A549 (cell line): ENCODE measurements at regions of chr5 and their contacts with region 1.

Region 1: GRCh38 chr5:14351845-14352712 is 208.9 kb downstream of the TRIO start:
- DNase-seq: peak; percentile 61 to 74
- ATAC-seq: peak; percentile 97
- H3K4me3 ChIP-seq: no peak overlapping the region
- H3K27ac ChIP-seq: no peak overlapping the region
- H3K4me1 ChIP-seq: no peaks in the 10 kb centered on the region
- CTCF ChIP-seq: peak; percentile 85
- EP300 ChIP-seq: no peak
- POLR2A ChIP-seq: no peak
- RAD21 ChIP-seq: peak; percentile 51 to 65

Region 2: DNA sequence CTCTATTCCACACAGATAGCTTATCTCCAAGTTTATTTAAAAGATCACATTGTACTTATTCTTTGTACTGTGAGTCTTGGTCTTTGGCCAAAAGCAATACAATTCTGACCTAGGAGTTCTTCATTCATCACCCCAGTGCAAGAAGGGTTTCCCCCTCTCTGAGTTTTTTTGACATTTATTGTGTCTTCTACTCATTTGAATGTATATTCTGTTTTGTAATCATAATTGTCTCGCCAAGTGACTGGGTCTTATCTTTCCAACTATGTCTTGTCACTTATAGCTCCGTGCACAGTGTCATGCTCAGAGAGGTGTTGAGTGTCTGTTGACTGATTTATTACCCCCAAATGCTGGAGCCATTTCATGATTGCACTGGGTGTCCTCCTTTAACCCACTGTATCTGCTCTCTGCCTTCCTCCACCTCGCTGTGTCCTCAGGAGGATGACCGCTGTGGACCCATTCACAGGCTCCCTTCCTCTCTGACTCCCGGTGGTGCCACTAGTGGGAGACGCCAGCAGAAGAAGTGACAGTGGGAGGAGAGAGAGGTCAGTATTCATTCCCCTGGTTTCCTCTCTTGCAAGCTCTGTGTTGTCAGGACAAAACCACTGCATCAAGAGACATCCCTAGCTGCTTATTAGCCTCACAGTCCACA is 220.1 kb before region 1 on chr5:
- CTCF ChIA-PET with region 1: no interaction called
- POLR2A ChIA-PET with region 1: no interaction called
- DNase-seq: no peak
- ATAC-seq: peak in 1 of 2 experiments; percentile 23; a peak in 2 of 6 replicates
- H3K4me3 ChIP-seq: no peak overlapping the region
- H3K27ac ChIP-seq: no peak overlapping the region
- H3K4me1 ChIP-seq: no peaks in the 10 kb centered on the region
- CTCF ChIP-seq: no peak
- EP300 ChIP-seq: no peak
- POLR2A ChIP-seq: no peak
- RAD21 ChIP-seq: no peak

Region 3: DNA sequence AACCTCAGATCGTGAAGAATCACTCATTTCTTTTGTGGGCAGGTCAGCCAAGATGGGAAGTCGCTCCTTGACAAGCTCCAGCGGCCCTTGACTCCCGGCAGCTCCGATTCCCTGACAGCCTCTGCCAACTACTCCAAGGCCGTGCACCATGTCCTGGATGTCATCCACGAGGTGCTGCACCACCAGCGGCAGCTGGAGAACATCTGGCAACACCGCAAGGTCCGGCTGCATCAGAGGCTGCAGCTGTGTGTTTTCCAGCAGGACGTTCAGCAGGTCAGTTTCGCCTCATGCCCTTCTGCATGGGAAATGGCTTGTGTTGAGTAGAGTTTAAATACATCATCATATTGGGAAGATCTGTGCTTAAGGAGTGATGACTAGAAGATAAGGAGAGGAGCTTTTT is 35.6 kb before region 1 on chr5:
- CTCF ChIA-PET with region 1: interaction called, 11 read pairs
- POLR2A ChIA-PET with region 1: no interaction called
- DNase-seq: no peak
- ATAC-seq: no peak
- H3K4me3 ChIP-seq: no peak overlapping the region
- H3K27ac ChIP-seq: no peak overlapping the region
- H3K4me1 ChIP-seq: no peaks in the 10 kb centered on the region
- CTCF ChIP-seq: no peak
- EP300 ChIP-seq: no peak
- POLR2A ChIP-seq: no peak
- RAD21 ChIP-seq: no peak

Region 4: DNA sequence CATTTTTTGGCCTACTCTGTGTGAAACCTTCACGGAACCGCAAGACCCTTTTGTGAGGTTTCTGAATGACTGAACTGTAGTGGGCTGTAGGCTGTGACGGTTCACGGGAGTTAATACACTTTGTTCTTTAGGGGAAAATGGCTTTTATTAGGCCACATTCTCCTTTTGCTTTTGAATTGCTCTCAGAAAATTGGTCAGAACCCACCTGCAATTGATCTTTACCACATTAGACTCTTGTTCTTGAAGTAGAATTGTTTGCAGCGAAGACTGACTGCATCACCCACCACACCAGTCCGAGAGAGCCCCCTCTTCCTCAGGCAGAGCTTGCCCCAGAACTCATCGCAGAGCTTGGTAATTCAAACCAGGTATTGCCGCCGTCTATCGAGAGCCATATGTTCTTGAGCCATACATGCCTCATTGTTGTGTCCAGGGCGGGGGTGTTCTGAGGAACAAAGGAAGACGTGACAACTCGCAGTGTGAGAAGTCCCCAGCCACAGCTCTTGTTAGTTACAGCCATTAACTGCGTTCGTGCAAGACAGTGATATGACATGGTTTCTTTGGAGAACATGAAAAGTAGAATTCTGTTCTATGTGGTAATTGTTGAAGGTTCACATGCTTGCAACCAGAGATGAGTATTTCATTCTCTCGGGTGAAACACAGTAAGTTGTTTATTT is 63.1 kb after region 1 on chr5:
- CTCF ChIA-PET with region 1: no interaction called
- POLR2A ChIA-PET with region 1: no interaction called
- DNase-seq: no peak
- ATAC-seq: no peak
- H3K4me3 ChIP-seq: no peak overlapping the region
- H3K27ac ChIP-seq: no peak overlapping the region
- H3K4me1 ChIP-seq: no peaks in the 10 kb centered on the region
- CTCF ChIP-seq: no peak
- EP300 ChIP-seq: no peak
- POLR2A ChIP-seq: no peak
- RAD21 ChIP-seq: no peak

Region 5: DNA sequence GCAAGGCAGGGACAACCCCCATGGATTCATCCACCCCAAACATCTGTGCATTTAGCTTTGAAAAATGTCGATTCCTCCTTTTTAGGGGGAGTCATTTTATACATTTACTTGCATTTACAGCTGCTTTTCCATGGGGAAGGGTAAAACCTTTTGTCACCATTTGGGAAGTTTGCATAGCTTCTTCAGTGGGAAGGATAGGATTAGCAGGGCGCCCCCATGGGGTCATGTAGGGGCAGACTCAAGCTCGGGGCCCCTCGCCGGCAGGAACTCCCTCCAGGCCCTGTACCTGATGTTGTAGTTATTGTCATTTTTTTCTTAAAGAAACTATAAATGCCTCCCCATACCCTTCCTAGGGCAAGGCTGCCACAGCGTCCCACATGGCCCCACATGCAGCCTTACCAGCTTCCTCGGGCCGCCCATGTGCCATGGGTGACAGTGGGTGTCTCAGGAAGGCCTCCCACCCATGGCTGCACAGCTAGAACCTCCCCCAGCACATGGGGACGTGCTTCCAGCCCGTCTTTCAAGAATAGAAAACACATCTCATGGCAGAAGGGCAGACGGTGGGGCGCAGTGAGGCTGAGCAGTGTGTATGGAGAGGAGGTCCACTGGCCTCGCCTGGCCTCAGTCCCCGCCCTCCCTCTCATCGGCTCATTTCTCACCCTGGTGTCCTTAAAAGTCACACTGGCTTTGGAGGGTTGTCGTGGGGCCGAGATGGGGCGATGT is 153.4 kb after region 1 on chr5:
- CTCF ChIA-PET with region 1: no interaction called
- POLR2A ChIA-PET with region 1: no interaction called
- DNase-seq: no peak
- ATAC-seq: no peak; a peak in 1 of 6 replicates
- H3K4me3 ChIP-seq: no peak overlapping the region
- H3K27ac ChIP-seq: no peak overlapping the region
- H3K4me1 ChIP-seq: no peaks in the 10 kb centered on the region
- CTCF ChIP-seq: no peak
- EP300 ChIP-seq: no peak
- POLR2A ChIP-seq: no peak
- RAD21 ChIP-seq: no peak